PC-3 (cell line): ENCODE measurements at regions of chr15 and their contacts with region 1.

Region 1: GRCh38 chr15:76190834-76191538 is 120.3 kb downstream of the ETFA start:
- DNase-seq: peak; percentile 84
- ATAC-seq: peak; percentile 94
- H3K4me3 ChIP-seq: peak overlapping the region; percentile 49
- H3K27ac ChIP-seq: no peak overlapping the region
- H3K4me1 ChIP-seq: peaks cover 10% of the 10 kb centered on the region
- H3K27me3 ChIP-seq: no peaks in the 10 kb centered on the region
- CTCF ChIP-seq: peak; percentile 89

Region 2: DNA sequence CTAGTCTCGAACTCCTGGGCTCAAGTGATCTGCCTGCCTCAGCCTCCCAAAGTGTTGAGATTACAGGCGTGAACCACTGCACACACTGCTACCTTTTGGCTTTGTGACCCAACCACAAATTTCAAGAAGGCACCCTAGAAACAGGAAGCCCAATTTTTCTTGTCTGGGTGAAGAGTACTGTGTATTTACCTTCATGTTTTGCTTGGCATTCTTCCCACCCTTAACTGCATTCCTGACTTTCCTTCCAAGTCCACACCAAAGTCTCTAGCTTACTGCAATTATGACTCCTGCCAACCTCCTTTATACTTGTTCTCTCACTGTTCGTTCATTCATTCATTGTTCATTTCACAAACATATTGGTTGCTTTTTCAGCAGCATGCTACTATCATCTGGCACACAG is 26.0 kb after region 1 on chr15:
- CTCF ChIA-PET with region 1: no interaction called
- POLR2A ChIA-PET with region 1: no interaction called
- intact Hi-C with region 1: loop called (anchors 2 kb)
- DNase-seq: peak; percentile 79
- ATAC-seq: peak; percentile 84
- H3K4me3 ChIP-seq: no peak overlapping the region; the same call in 1 of the 2 replicates
- H3K27ac ChIP-seq: 0 out of 2 replicates have a peak overlapping the region, but pooled peaks have one; percentile 9
- H3K4me1 ChIP-seq: peaks cover 24% of the 10 kb centered on the region
- H3K27me3 ChIP-seq: no peaks in the 10 kb centered on the region
- CTCF ChIP-seq: no peak

Region 3: GRCh38 chr15:76285239-76285825 is 94.3 kb after region 1 on chr15:
- CTCF ChIA-PET with region 1: no interaction called
- POLR2A ChIA-PET with region 1: no interaction called
- intact Hi-C with region 1: loop called (anchors 10 kb)
- DNase-seq: peak; percentile 44
- ATAC-seq: peak; percentile 55; the same call in 1 of the 2 replicates
- H3K4me3 ChIP-seq: no peak overlapping the region
- H3K27ac ChIP-seq: no peak overlapping the region
- H3K4me1 ChIP-seq: no peaks in the 10 kb centered on the region
- H3K27me3 ChIP-seq: no peaks in the 10 kb centered on the region
- CTCF ChIP-seq: peak; percentile 64